A673 (cell line): ENCODE measurements at regions of chr10 and their contacts with region 1.

Region 1: GRCh38 chr10:75019370-75019769 is 92.1 kb upstream of the SAMD8 start:
- DNase-seq: peak; percentile 61
- H3K4me3 ChIP-seq: no peak overlapping the region
- H3K27ac ChIP-seq: no peak overlapping the region
- H3K4me1 ChIP-seq: peaks cover 22% of the 10 kb centered on the region
- H3K27me3 ChIP-seq: no peaks in the 10 kb centered on the region
- CTCF ChIP-seq: peak; percentile 63

Region 2: GRCh38 chr10:74244097-74244685 is 775.2 kb before region 1 on chr10:
- CTCF ChIA-PET with region 1: interaction called, 3 read pairs
- POLR2A ChIA-PET with region 1: no interaction called
- intact Hi-C with region 1: loop called (anchors 5 kb)
- DNase-seq: peak; percentile 71
- H3K4me3 ChIP-seq: no peak overlapping the region
- H3K27ac ChIP-seq: no peak overlapping the region
- H3K4me1 ChIP-seq: peaks cover 10% of the 10 kb centered on the region
- H3K27me3 ChIP-seq: no peaks in the 10 kb centered on the region
- CTCF ChIP-seq: peak; percentile 68

Region 3: DNA sequence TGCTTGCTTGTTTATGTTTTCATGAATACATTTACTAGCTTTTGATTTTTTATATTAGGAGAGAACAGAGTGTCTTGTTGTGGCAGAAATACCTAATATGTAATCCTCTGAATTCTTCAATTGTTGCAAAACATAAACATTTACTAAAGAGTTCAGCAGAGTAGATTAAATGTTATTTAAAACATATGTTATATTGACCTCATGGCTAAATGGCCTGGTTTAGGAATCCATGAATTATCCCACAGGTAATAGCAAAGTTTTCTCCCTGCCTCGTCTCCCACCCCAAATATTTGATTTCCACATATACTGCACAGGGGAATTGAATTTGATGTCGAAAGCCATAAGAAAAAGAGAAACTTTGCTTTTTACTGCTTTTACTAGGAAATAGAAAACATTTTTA is 756.5 kb before region 1 on chr10:
- CTCF ChIA-PET with region 1: no interaction called
- POLR2A ChIA-PET with region 1: no interaction called
- intact Hi-C with region 1: loop called (anchors 1 kb)
- DNase-seq: no peak
- H3K4me3 ChIP-seq: no peak overlapping the region
- H3K27ac ChIP-seq: no peak overlapping the region
- H3K4me1 ChIP-seq: peaks cover 6% of the 10 kb centered on the region
- H3K27me3 ChIP-seq: no peaks in the 10 kb centered on the region
- CTCF ChIP-seq: no peak

Region 4: DNA sequence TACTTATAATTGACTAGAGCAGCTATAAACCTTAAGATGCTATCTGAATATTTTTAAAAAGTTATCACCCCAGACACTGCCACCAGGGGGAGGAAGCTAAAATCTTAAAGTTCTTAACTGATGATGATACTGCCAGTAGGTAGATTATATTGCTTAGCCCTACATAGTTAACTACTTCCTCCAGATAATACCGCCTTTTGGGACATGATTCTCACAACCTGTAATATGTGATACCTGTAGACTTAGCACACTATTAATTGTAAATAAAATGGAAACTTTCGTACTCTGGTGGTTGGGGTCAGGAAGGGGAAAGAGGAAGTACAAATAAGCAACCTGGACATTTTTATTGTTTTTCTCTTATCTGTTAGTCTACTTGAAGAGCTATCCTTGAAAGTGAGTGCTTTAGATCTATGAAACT is 599.4 kb before region 1 on chr10:
- CTCF ChIA-PET with region 1: interaction called, 3 read pairs
- POLR2A ChIA-PET with region 1: no interaction called
- intact Hi-C with region 1: loop called (anchors 5 kb)
- DNase-seq: peak; percentile 87
- H3K4me3 ChIP-seq: no peak overlapping the region
- H3K27ac ChIP-seq: peak overlapping the region; percentile 83
- H3K4me1 ChIP-seq: peaks cover 41% of the 10 kb centered on the region
- H3K27me3 ChIP-seq: no peaks in the 10 kb centered on the region
- CTCF ChIP-seq: peak; percentile 81

Region 5: GRCh38 chr10:74826142-74827044 is 193.0 kb before region 1 on chr10 and contains the start of gene KAT6B:
- CTCF ChIA-PET with region 1: no interaction called
- POLR2A ChIA-PET with region 1: no interaction called
- intact Hi-C with region 1: loop called (anchors 10 kb)
- DNase-seq: peak; percentile 100
- H3K4me3 ChIP-seq: peak within 1 kb of the TSS; percentile 93
- H3K27ac ChIP-seq: peak within 1 kb of the TSS; percentile 97
- H3K4me1 ChIP-seq: peaks cover 17% of the 10 kb centered on the region
- H3K27me3 ChIP-seq: peaks cover 4% of the 10 kb centered on the region
- CTCF ChIP-seq: peak; percentile 46; the same call in 1 of the 2 replicates
- total RNA-seq, gene KAT6B: 21.8 and 22.2 TPM in 2 replicates

Region 6: DNA sequence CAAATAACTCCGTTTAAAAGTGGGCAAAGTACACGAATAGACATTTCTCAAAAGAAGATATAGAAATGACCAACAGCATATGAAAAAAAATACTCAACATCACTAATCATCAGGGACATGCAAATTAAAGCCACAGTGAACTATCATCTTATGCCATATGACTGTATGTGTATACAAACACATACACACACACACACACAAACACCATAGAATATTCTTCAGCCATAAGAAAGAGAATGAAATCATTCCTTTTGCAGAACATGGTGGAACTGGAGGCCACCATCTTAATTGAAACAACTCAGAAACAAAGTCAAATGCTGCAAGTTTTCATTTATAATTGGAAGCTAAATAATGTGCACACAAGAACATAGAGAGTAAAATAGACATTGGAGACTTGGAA is 1598.8 kb after region 1 on chr10:
- CTCF ChIA-PET with region 1: no interaction called
- POLR2A ChIA-PET with region 1: no interaction called
- intact Hi-C with region 1: no loop called
- DNase-seq: no peak
- H3K4me3 ChIP-seq: no peak overlapping the region
- H3K27ac ChIP-seq: no peak overlapping the region
- H3K4me1 ChIP-seq: no peaks in the 10 kb centered on the region
- H3K27me3 ChIP-seq: no peaks in the 10 kb centered on the region
- CTCF ChIP-seq: no peak